Left colon (tissue), 2 donors: ENCODE measurements at regions of chr5 and their contacts with region 1.

Region 1: DNA sequence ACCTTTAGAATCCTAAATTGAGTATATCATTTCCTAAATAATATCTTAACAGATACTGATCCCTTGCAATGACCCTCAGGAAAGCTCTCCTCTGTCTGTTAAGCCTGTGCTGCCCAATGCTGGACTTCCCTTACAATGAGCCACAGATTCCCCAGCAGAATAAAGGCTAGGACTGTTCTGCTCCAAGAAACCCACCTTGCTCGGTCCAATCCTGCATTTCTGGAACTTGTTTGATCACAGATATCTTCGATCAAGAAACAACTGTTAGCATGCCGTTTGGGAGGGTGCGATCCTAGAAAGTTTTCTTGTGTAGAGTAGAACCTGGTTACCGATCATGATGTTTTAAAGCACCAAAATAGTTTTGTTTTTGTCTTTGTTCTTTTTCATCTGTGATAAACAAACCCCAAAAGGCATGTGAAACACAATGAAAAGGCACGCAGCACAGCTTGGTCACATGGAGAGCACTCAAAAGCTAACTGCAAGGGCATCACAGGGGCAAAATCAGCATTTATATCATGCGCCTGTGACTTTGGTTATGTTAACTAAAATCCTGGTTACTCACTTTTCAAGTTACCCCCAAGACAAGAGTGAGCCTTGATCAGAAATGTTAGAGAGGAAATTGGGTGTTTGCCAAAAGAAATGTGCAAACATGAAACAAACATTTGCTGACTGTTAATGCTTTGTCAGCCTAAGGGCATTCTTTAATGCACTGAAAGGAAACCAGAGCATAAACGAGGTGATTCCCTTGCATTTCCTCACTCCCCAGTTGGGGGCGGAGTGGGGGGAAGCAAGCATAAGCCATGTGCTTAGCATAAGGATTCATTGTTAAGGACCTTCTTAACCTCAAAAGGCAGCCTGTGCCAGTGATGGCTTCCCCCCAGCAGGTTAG is 61.9 kb upstream of the ADAMTS16 start:
- DNase-seq: no peak
- ATAC-seq: no peak

Region 2: GRCh38 chr5:5902678-5903646 is 824.7 kb after region 1 on chr5:
- intact Hi-C with region 1: loop called in 1 of 2 experiments (anchors 10 kb)
- DNase-seq: no peak
- ATAC-seq: no peak